Left ventricle myocardium superior (tissue), 1 donor: ENCODE measurements at regions of chr9 and their contacts with region 1.

Region 1: GRCh38 chr9:115013998-115014397 is 83.6 kb upstream of the TNFSF8 start:
- DNase-seq: peak; percentile 65
- ATAC-seq: peak; percentile 84

Region 2: GRCh38 chr9:114662081-114662989 is 351.7 kb before region 1 on chr9:
- intact Hi-C with region 1: loop called (anchors 5 kb)
- DNase-seq: no peak
- ATAC-seq: peak; percentile 69

Region 3: DNA sequence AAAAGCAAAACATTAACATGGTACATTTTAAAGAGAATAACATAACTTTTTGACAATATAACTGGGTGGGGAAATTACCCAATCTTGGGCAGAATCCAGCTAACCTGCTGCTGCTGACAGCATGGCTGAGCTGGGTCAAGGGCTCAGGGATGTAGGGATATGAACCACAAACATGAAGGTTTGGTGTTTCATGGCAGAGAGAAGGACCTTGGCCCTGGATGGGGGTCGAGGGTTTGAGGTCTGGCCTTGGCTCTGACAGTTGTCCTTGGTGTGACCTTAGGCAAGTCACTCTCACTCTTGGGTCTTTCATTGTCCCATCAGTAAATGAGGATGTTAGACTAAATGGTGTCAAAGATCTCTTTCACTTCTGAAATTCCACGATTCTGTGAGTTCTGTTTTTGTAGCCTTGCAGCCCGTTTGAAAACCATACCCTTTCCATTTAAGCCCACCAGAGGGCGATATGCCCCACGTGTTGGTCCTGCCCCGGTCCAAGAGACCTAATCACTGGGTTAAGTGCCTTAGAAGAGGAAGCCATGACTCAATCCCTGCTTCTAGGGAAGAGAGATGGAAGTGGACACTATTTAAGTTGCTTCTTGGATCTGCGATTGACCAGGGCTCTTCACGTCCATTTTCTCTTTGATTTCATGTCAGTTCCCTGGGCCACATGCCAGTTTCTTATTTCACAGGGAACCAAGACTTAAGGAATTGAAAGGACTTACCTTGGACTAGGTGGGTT is 275.2 kb before region 1 on chr9:
- intact Hi-C with region 1: loop called (anchors 5 kb)
- DNase-seq: peak; percentile 46
- ATAC-seq: peak; percentile 84

Region 4: DNA sequence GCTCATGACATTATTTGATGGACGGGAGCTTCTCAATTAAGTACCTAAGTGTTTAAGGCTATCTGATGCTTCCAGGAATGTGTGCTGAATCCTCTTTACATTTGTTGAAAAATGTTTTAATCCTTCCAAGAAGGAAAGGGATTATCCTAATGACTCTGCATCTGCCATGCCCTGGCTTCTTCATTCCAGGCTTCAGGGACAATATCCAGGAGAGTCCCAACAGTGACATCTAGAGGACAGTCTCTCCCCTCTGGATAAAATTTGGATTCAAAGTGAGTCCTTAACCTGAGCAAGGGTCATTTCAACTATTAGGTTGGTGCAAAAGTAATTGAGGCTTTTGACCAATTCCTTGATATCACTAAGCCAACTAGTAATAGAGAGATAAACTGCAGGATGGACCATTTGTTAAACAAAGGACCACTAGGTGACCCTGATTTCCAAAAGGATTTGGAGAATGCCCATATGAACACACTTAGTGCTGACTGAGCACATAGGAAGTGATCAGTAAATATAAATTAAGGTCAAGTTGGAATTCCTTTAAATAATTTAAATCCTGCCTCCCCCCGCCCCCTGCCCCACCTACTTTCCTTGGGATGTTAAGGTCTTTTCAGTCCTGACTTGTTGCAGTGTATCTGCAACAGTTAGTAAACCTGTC is 102.7 kb before region 1 on chr9:
- intact Hi-C with region 1: loop called (anchors 10 kb)
- DNase-seq: no peak
- ATAC-seq: peak; percentile 57